Activated B cell treated with CpG ODN at 0.5 μM for 24 hours (primary cell): ENCODE measurements at regions of chr2 and their contacts with region 1.

Region 1: GRCh38 chr2:230987137-230988020 is 8.5 kb upstream of the SPATA3 start:
- DNase-seq: peak; percentile 80
- ATAC-seq: peak; percentile 75
- H3K4me3 Mint-ChIP-seq: peak overlapping the region; percentile 75
- H3K27ac Mint-ChIP-seq: no peak overlapping the region
- H3K4me1 Mint-ChIP-seq: peaks cover 18% of the 10 kb centered on the region
- H3K27me3 Mint-ChIP-seq: peaks cover 17% of the 10 kb centered on the region
- CTCF ChIP-seq: peak; percentile 61

Region 2: GRCh38 chr2:230847883-230848388 is 139.4 kb before region 1 on chr2:
- CTCF ChIA-PET with region 1: interaction called, 49 read pairs
- POLR2A ChIA-PET with region 1: interaction called, 3 read pairs
- intact Hi-C with region 1: loop called (anchors 1 kb)
- DNase-seq: peak; percentile 84
- ATAC-seq: peak; percentile 97
- H3K4me3 Mint-ChIP-seq: peak overlapping the region; percentile 50
- H3K27ac Mint-ChIP-seq: no peak overlapping the region
- H3K4me1 Mint-ChIP-seq: peaks cover 8% of the 10 kb centered on the region
- H3K27me3 Mint-ChIP-seq: peaks cover 22% of the 10 kb centered on the region
- CTCF ChIP-seq: peak; percentile 24

Region 3: GRCh38 chr2:230924470-230925341 is 62.7 kb before region 1 on chr2 and contains the start of gene GPR55:
- CTCF ChIA-PET with region 1: interaction called, 17 read pairs
- POLR2A ChIA-PET with region 1: interaction called, 11 read pairs
- intact Hi-C with region 1: loop called (anchors 1 kb)
- DNase-seq: peak; percentile 18
- ATAC-seq: peak; percentile 81
- H3K4me3 Mint-ChIP-seq: peak within 1 kb of the TSS; percentile 80
- H3K27ac Mint-ChIP-seq: peak within 1 kb of the TSS; percentile 79
- H3K4me1 Mint-ChIP-seq: peaks cover 40% of the 10 kb centered on the region
- H3K27me3 Mint-ChIP-seq: no peaks in the 10 kb centered on the region
- CTCF ChIP-seq: no peak
- total RNA-seq, gene GPR55: 4.5 and 6.3 TPM in 2 replicates

Region 4: DNA sequence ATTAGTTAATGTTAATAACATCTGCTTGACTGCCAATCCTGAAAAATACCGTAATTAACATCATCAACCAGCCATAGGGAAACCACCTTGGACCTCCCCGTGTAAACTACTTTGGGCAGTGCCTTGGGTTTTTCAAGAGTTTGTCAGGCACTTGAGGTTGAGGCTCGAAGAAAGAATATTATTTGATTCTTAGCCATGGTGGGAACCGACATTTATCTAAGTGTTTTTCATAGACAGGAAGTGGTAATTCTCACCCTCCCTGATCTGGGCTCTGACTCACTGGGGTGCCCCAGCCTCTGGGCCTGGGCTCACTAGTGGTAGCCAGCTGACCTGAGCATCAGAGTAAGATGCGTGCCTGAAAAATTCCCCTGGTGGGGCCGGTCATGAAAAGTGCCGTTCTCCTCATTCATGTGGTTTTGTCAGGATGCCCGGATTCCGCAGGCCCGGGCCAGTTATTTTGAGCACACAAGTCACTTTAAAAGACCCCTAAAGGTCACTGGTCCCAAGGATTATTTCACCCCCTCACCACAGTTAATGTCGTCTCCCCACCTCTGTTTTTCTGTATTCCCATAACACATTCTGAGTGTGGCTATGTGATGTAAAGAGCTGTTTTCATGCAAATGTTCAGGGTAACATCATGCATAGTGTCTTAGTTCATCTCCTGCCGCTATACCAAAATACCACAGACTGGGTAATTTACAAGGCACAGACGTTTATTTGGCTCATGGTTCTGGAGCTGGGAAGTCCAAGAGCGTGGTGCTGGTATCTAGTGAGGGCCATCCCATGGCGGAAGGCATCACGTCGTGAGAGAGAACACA is 13.1 kb before region 1 on chr2:
- CTCF ChIA-PET with region 1: interaction called, 15 read pairs
- POLR2A ChIA-PET with region 1: interaction called, 42 read pairs
- intact Hi-C with region 1: no loop called
- DNase-seq: peak; percentile 43
- ATAC-seq: peak; percentile 88
- H3K4me3 Mint-ChIP-seq: peak overlapping the region; percentile 60
- H3K27ac Mint-ChIP-seq: peak overlapping the region; percentile 92
- H3K4me1 Mint-ChIP-seq: peaks cover 44% of the 10 kb centered on the region
- H3K27me3 Mint-ChIP-seq: peaks cover 2% of the 10 kb centered on the region
- CTCF ChIP-seq: no peak

Region 5: DNA sequence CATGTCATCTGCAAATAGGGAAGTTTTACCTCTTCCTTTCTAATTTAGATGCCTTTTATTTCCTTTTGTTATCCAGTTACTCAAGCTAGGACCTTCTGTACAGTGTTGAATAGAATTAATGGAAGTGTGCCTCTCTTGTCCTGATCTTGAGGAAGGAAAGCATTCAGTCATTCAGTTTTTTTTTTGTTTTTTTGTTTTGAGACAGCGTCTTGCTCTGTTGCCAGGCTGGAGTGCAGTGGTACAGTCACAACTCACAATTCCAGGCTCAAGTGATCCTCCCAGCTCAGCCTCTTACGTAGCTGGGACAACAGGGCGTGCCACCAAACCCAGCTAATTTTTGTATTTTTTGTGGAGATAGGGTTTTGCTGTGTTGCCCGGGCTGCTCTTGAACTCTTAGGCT is 1187.3 kb after region 1 on chr2:
- CTCF ChIA-PET with region 1: no interaction called
- POLR2A ChIA-PET with region 1: no interaction called
- intact Hi-C with region 1: no loop called
- DNase-seq: no peak
- ATAC-seq: no peak
- H3K4me3 Mint-ChIP-seq: no peak overlapping the region
- H3K27ac Mint-ChIP-seq: no peak overlapping the region
- H3K4me1 Mint-ChIP-seq: no peaks in the 10 kb centered on the region
- H3K27me3 Mint-ChIP-seq: no peaks in the 10 kb centered on the region
- CTCF ChIP-seq: no peak